ENCODE measurements at regions of chr3 and their contacts with region 1.

Region 1: GRCh38 chr3:63818281-63819150 is 583 bp upstream of the C3orf49 start:
- DNase-seq: peak; percentile 33
- H3K4me3 ChIP-seq: no peak overlapping the region
- H3K27ac ChIP-seq: no peak overlapping the region
- H3K4me1 ChIP-seq: peaks cover 8% of the 10 kb centered on the region
- H3K27me3 ChIP-seq: no peaks in the 10 kb centered on the region
- CTCF ChIP-seq: peak; percentile 78 to 80

Region 2: GRCh38 chr3:62622553-62623193 is 1195.8 kb before region 1 on chr3:
- CTCF ChIA-PET with region 1: no interaction called
- dilution Hi-C with region 1: no loop called
- in situ Hi-C with region 1: loop called in 1 of 2 experiments (anchors 25 kb)
- intact Hi-C with region 1: no loop called
- DNase-seq: peak; percentile 40
- H3K4me3 ChIP-seq: no peak overlapping the region
- H3K27ac ChIP-seq: no peak overlapping the region
- H3K4me1 ChIP-seq: no peaks in the 10 kb centered on the region
- H3K27me3 ChIP-seq: no peaks in the 10 kb centered on the region
- CTCF ChIP-seq: peak; percentile 52 to 74

Region 3: DNA sequence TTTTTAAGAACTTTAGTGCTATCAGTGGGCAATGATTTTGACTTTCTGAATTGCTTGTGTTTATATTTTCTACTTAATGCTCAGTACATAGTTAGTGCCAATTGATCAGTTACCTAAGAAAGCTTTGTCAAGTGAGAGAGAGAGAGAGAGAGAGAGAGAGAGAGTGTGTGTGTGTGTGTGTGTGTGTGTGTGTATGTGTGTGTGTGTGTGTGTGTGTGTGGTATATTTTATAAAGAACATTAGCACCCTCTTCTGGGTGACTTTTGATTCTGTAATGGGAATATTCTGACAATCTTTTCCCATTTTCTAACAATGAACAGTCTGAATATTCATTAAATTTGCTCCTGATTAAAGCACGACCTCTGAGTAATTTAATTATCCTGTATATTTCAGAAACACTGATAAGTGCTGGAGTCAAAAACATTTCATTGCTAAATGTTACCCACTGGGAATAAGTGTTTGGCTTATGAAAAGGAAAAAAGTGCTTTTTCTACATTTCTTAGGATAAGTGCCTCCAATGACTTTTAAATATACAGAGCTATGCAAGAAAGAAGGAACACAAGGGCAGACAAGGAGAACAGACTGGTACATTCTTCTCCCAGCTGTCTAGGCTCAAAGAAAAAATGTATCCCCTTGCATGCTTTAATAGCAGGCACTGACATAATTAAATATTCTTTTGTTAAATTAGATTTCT is 572.8 kb before region 1 on chr3:
- CTCF ChIA-PET with region 1: no interaction called
- dilution Hi-C with region 1: no loop called
- in situ Hi-C with region 1: no loop called
- intact Hi-C with region 1: loop called (anchors 10 kb)
- DNase-seq: no peak
- H3K4me3 ChIP-seq: no peak overlapping the region
- H3K27ac ChIP-seq: no peak overlapping the region
- H3K4me1 ChIP-seq: no peaks in the 10 kb centered on the region
- H3K27me3 ChIP-seq: peaks cover 2% of the 10 kb centered on the region
- CTCF ChIP-seq: no peak

Region 4: GRCh38 chr3:63624941-63625560 is 193.5 kb before region 1 on chr3:
- CTCF ChIA-PET with region 1: no interaction called
- dilution Hi-C with region 1: no loop called
- in situ Hi-C with region 1: no loop called
- intact Hi-C with region 1: no loop called
- DNase-seq: peak; percentile 86
- H3K4me3 ChIP-seq: no peak overlapping the region
- H3K27ac ChIP-seq: no peak overlapping the region
- H3K4me1 ChIP-seq: peaks cover 16% of the 10 kb centered on the region
- H3K27me3 ChIP-seq: no peaks in the 10 kb centered on the region
- CTCF ChIP-seq: no peak

Region 5: DNA sequence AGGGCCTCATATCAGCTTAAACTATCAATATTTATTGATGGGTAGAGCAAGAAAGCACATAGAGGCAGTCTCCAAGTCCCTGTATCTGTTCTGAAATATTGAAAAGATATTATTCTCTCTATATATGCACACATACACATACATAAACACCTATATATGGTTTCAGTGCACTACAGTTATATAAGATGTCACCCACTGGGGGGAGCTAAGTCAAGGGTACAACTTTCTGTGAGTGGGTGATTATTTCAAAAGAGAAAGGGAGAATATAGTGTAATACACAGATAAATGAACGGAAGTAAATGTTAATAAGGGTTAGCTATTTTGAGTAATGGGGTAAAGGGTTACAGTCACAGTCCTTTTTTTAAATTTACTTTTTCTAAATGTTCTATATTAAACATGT is 157.3 kb before region 1 on chr3:
- CTCF ChIA-PET with region 1: interaction called, 5 read pairs
- dilution Hi-C with region 1: no loop called
- in situ Hi-C with region 1: no loop called
- intact Hi-C with region 1: loop called (anchors 2 kb)
- DNase-seq: no peak
- H3K4me3 ChIP-seq: no peak overlapping the region
- H3K27ac ChIP-seq: no peak overlapping the region
- H3K4me1 ChIP-seq: peaks cover under 1% of the 10 kb centered on the region
- H3K27me3 ChIP-seq: no peaks in the 10 kb centered on the region
- CTCF ChIP-seq: peak; percentile 4 to 24

Region 6: DNA sequence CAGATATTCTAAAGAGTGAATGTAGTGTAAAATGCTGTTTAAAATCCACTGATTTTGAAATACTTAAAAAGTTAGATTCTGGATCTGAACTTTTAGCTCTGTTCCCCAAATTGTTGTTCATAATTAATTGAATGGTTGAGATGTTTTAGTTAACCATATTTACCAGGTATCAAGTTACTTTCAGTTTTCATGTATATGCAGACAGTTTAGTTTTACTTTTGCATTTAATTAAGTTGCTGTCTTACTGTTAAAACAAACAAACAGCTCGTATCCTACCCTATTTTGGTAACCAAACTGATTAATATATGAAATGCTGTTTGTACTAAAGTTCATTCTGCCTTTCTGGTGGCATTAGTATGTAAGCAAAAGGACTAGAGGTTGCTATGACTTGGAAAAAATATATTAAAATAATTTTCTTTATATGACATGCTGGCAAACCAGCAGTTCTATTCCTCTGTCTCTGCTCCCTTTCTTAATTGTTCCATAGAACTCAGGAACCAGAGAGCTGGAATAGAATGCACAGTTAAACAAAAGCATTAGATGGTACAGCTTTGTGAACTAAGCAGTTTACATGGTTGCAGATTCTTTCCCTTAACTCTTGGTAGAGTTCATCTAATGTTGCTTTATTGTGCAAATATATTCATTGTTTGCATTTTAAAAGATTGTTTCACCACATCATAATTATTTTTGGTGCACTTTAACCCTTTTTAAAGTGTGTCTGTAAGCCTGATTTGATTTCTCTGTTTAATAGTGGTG is 133.2 kb after region 1 on chr3:
- CTCF ChIA-PET with region 1: no interaction called
- dilution Hi-C with region 1: no loop called
- in situ Hi-C with region 1: no loop called
- intact Hi-C with region 1: no loop called
- DNase-seq: no peak
- H3K4me3 ChIP-seq: no peak overlapping the region
- H3K27ac ChIP-seq: no peak overlapping the region
- H3K4me1 ChIP-seq: peaks cover 15% of the 10 kb centered on the region
- H3K27me3 ChIP-seq: no peaks in the 10 kb centered on the region
- CTCF ChIP-seq: no peak

Region 7: DNA sequence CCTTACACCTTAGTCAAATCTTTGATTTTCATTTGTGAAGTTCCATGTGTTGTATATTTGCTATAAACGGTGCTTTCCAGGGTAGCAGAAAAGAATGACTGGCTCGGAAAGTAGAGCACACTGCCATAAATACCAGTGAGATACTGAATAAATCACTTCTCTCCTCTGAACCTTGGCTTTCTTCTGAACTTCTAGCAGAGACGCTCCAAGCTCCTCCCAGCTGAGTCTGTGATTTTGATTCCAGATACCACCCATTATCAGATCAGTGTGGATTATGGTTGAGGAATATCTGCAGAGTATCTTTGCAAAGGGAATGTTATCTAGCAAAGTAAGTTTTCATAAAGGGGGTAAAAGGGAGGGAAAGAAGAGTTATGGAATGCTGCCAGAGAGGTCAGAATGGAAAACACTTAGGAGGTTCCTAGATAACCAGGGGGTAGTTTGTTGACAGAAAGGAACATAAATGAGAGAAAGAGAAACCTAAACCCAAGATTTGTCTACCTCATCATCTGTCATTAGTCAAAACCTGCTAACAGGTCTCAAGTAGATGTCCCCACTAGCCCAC is 303.3 kb after region 1 on chr3:
- CTCF ChIA-PET with region 1: no interaction called
- dilution Hi-C with region 1: no loop called
- in situ Hi-C with region 1: no loop called
- intact Hi-C with region 1: no loop called
- DNase-seq: no peak
- H3K4me3 ChIP-seq: no peak overlapping the region
- H3K27ac ChIP-seq: no peak overlapping the region
- H3K4me1 ChIP-seq: no peaks in the 10 kb centered on the region
- H3K27me3 ChIP-seq: no peaks in the 10 kb centered on the region
- CTCF ChIP-seq: no peak

Region 8: DNA sequence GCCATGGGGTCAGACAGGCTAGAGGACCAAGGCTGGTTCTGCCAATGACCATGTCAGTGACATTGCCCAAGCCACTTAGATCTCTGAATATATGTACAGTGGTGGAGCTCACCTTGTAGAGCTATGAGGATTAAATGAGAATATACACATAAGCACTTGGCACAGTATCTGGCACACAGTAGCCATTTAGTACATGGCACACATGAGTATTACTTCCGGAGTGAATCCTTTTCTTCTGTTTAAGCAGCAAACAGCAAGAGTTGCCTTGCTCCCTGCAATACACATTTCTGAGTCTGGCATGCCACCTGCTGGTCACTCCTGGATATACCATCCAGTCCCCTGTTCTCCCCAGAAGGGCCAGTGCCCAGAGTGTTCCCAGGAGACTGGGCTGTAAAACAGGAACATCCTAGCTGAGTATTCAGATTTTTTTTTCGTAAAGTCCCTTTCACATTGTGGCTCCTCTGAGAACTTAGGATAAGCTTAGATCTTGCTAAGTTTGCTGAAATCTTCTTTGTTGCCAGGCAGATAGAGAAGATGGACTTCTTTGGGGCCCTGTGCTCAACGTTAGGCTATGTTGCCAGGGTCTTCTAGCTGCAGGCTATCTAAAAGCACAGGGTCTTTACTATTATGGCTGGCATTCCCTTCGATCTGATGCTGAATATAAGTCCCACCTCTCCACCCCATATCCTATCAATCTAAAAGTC is 665.9 kb after region 1 on chr3:
- CTCF ChIA-PET with region 1: no interaction called
- dilution Hi-C with region 1: no loop called
- in situ Hi-C with region 1: no loop called
- intact Hi-C with region 1: loop called (anchors 10 kb)
- DNase-seq: peak; percentile 58
- H3K4me3 ChIP-seq: no peak overlapping the region
- H3K27ac ChIP-seq: no peak overlapping the region
- H3K4me1 ChIP-seq: peaks cover 4% of the 10 kb centered on the region
- H3K27me3 ChIP-seq: no peaks in the 10 kb centered on the region
- CTCF ChIP-seq: peak; percentile 73 to 88